HEK293T (cell line): ENCODE measurements at regions of chr17 and their contacts with region 1.

Region 1: DNA sequence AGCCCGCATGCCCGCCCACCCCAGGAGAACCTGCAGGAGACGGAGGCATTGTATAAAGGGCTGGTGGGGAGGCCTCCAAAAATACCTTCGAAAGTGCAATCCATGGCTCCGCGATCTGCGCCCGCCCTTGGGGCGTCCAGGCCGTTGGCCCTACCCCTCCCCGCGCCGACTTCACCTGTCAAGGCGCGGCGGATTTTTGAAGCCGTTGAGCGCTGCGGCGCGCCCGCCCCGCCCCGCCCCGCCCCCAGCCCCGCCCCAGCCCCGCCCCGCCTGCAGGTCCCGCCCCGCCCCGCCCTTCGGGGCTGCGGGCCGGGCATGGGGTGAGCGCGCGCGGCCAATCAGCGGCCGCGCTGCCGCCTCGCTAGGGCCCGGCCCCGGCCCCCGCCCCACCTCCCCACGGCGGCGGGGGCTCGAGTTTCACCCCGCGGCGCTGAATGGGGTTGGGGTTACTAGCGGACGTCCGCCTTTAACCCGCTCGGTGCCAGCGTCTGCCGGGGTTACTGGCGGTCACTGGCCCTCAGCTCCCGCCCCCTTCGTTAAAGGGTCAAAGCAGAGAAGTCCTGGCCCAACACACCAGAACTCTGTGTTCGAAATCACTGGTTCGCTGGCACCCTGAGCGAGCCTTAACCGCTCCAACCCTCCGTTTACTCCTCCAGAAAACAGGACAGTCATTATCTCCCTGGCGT is 13.2 kb downstream of the SREBF1 start:
- DNase-seq: peak; percentile 96

Region 2: GRCh38 chr17:18203308-18203707 is 379.7 kb after region 1 on chr17:
- CTCF ChIA-PET with region 1: interaction called, 12 read pairs
- POLR2A ChIA-PET with region 1: no interaction called
- DNase-seq: no peak